ENCODE measurements at regions of chr5 and their contacts with region 1.

Region 1: DNA sequence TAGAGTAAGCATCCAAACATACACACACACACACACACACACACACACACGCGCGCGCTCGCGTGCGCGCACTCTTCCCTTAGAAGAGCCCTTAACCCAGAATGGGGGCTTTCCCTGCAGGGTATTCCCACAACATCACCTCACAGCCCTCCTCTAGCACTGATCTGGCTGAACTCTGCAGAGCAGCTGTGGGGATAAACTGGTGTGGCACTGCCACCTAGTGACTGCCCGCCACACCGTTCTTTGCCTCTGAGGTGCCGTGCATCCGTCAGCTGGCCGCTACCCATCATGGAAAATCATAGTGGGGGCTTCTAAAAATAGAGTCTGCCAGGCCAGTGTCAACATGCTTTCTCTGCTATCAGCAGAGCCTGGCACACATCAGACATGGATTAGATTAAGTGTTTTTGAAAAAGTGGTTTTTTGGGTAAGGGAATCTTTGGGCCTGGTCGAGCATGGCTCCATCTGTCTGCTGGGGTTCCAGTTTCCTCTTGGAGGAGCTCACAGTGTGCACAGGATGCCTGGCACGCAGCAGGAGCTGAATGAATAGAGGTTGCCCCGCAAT is 88.1 kb downstream of the KCNN2 start:
- DNase-seq: peak; percentile 78
- H3K4me3 Mint-ChIP-seq: no peak overlapping the region
- H3K27ac Mint-ChIP-seq: no peak overlapping the region
- H3K4me1 Mint-ChIP-seq: no peaks in the 10 kb centered on the region
- H3K27me3 Mint-ChIP-seq: peaks cover 2% of the 10 kb centered on the region

Region 2: GRCh38 chr5:113678924-113679575 is 770.9 kb before region 1 on chr5:
- intact Hi-C with region 1: loop called (anchors 2 kb)
- DNase-seq: peak; percentile 78
- H3K4me3 Mint-ChIP-seq: no peak overlapping the region
- H3K27ac Mint-ChIP-seq: no peak overlapping the region
- H3K4me1 Mint-ChIP-seq: no peaks in the 10 kb centered on the region
- H3K27me3 Mint-ChIP-seq: peaks cover 4% of the 10 kb centered on the region

Region 3: DNA sequence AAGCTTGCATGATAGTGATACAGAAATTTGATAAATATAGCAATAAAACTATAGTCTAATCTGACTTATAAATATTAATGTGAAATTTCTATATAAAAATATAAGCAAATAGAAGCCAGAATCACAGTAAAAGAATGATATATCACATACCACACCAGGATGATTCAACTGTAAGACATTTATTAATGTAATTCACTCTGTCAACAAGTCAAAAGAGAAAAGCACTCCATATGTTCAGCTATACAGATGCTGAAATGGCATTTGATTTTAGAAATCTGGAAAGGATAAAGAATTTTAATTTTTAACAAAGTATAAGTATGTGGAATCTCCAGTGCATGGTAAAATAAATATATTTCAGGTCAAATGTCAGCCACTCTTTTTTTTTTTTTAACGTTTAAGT is 284.3 kb after region 1 on chr5:
- intact Hi-C with region 1: no loop called
- DNase-seq: no peak
- H3K4me3 Mint-ChIP-seq: no peak overlapping the region
- H3K27ac Mint-ChIP-seq: no peak overlapping the region
- H3K4me1 Mint-ChIP-seq: no peaks in the 10 kb centered on the region
- H3K27me3 Mint-ChIP-seq: no peaks in the 10 kb centered on the region